ENCODE measurements at regions of chr12 and their contacts with region 1.

Region 1: GRCh38 chr12:104896146-104896545 is 61.9 kb downstream of the SLC41A2 start:
- DNase-seq: peak; percentile 67
- ATAC-seq: peak; percentile 71
- H3K4me3 ChIP-seq: no peak overlapping the region
- H3K27ac ChIP-seq: peak overlapping the region; percentile 39
- H3K4me1 ChIP-seq: peaks cover 20% of the 10 kb centered on the region
- H3K27me3 ChIP-seq: no peaks in the 10 kb centered on the region
- CTCF ChIP-seq: no peak
- EP300 ChIP-seq: no peak
- POLR2A ChIP-seq: no peak
- RAD21 ChIP-seq: no peak

Region 2: GRCh38 chr12:104816845-104817503 is 79.2 kb before region 1 on chr12:
- CTCF ChIA-PET with region 1: no interaction called
- POLR2A ChIA-PET with region 1: no interaction called
- in situ Hi-C with region 1: no loop called
- intact Hi-C with region 1: no loop called
- DNase-seq: no peak
- ATAC-seq: no peak
- H3K4me3 ChIP-seq: no peak overlapping the region
- H3K27ac ChIP-seq: no peak overlapping the region
- H3K4me1 ChIP-seq: no peaks in the 10 kb centered on the region
- H3K27me3 ChIP-seq: no peaks in the 10 kb centered on the region
- CTCF ChIP-seq: no peak
- EP300 ChIP-seq: no peak
- POLR2A ChIP-seq: no peak
- RAD21 ChIP-seq: no peak

Region 3: DNA sequence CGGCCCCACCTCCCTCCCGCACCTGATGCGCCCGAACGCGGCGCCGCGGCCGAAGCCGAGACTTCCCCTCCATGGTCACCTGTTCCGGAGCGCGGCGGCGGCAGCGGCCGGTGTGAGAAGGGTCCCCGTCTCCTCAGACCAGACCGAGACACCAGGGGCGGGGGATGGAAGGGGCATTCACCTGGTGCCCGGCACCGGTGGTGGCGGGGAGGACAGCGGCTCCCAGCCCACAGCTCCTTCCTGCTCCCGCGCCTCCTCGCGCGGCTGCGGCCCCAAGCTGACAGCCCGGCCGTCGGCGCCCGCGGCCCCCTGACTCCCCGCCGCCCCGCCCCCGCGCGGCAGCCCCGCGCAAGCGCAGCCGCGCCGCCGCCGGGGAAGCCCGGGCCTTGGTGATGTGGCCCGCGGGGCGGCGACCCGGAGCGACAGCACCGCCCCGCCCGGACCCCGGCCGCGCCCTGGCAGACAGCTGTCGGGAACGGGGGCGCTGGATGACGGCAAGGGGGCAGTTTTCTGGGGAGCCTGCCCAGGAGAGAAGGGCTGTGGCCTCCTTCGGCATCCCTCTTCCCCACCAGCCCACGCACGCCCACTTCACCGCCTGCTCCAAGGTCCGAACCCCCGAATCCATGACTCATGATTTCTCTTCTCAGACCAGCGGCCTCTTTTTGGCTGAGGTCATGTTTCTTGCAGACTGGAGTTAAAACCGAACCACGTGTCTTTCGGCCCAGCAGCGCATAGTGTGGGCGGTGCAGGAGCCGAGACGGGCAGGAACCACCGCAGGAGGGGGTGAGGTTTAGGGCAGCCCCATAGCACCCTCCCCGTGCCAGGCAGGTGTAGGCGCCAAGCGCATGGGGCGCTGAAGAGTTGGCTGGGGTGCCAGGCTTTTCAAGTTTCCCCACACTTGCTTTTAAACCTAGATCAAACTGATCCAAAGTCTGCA is 62.1 kb after region 1 on chr12 and contains the start of gene SLC41A2:
- CTCF ChIA-PET with region 1: no interaction called
- POLR2A ChIA-PET with region 1: no interaction called
- in situ Hi-C with region 1: no loop called
- intact Hi-C with region 1: loop called (anchors 5 kb)
- DNase-seq: peak; percentile 79
- ATAC-seq: peak; percentile 82
- H3K4me3 ChIP-seq: peak within 1 kb of the TSS; percentile 69 to 87 (median 78)
- H3K27ac ChIP-seq: peak within 1 kb of the TSS; percentile 65
- H3K4me1 ChIP-seq: peaks cover 31% of the 10 kb centered on the region
- H3K27me3 ChIP-seq: no peaks in the 10 kb centered on the region; a peak in 3 of 5 replicates
- CTCF ChIP-seq: peak; percentile 22; the same call in 1 of the 2 replicates
- EP300 ChIP-seq: no peak
- POLR2A ChIP-seq: peak; percentile 56 to 69; a peak in 3 of 4 replicates
- RAD21 ChIP-seq: no peak
- total RNA-seq, gene SLC41A2: 12.8 and 14.7 TPM in 2 replicates